A549 (cell line): ENCODE measurements at regions of chr6 and their contacts with region 1.

Region 1: DNA sequence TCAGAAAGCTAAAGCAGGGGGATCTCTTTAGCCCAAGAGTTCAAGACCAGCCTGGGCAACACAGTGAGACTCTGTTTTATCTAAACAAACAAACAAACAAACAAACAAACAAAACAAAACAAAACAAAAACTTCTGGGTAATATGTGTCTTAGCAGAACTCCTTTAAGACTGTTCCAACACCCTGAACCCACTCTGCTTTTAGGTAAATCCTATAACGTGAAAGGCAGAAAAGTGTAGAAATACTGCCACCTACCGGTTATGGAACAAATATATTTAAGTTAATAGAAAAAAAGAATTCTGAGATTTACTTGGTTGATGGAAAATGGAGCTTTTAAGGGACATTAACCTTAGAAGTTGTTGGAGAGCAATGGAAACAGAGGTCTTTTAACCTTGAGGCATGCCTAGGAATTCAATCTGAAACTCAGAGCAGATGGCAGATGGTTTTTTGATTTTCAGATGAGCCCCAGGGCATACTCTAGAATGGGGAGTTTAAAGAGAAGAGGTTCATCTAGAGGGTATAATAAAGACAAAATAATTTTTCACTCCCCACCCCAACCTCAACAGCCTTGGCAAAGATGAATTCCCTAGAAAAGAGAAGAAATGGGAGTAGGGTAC is 38.5 kb downstream of the SOD2 start:
- DNase-seq: peak; percentile 11 to 49
- ATAC-seq: peak in 1 of 2 experiments; percentile 62; a peak in 3 of 6 replicates
- H3K4me3 ChIP-seq: no peak overlapping the region
- H3K27ac ChIP-seq: no peak overlapping the region
- H3K4me1 ChIP-seq: no peaks in the 10 kb centered on the region
- CTCF ChIP-seq: peak; percentile 65; the same call in 2 of the 3 replicates
- EP300 ChIP-seq: no peak
- POLR2A ChIP-seq: no peak
- RAD21 ChIP-seq: peak; percentile 71 to 78

Region 2: GRCh38 chr6:159174263-159174969 is 480.2 kb before region 1 on chr6:
- CTCF ChIA-PET with region 1: interaction called, 25 read pairs
- POLR2A ChIA-PET with region 1: no interaction called
- DNase-seq: peak; percentile 46 to 53
- ATAC-seq: peak; percentile 76 to 94; a peak in 5 of 6 replicates
- H3K4me3 ChIP-seq: no peak overlapping the region
- H3K27ac ChIP-seq: no peak overlapping the region
- H3K4me1 ChIP-seq: peaks cover 6% of the 10 kb centered on the region; the same call in 2 of the 3 replicates
- CTCF ChIP-seq: peak; percentile 69
- EP300 ChIP-seq: no peak
- POLR2A ChIP-seq: no peak
- RAD21 ChIP-seq: peak; percentile 75 to 78

Region 3: DNA sequence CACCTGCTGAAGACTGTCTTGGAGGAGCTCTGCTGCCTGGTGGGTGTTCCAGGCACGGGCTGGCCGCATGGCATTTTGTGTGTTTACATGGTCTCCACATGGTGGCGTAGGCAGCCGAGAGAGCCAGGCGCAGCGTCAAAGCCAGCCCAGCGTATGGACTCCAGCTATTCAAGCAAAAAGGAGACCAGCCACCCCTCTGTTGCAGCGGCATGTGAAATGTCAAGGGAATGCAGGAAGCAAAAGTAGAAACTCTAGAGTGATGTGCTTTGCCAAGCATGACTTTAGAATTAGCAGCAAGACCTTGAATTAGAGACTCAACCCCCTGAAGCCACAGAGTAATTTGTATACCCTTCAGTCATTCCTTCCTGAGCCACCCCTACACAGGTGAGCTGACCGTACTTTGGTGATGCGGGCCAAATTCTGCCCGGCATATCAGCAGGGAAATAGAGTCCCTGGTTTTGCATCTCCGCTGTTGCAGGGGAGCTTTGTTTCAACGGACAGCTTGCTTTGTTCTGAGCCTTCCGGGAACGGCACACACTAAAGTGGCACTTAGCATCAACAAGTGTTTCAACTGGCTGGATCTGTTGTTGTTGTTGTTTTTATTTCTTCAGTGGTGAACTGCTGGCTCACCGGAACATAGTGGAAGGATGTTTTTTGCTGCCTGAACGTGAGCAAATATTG is 436.9 kb before region 1 on chr6:
- CTCF ChIA-PET with region 1: interaction called, 31 read pairs
- POLR2A ChIA-PET with region 1: no interaction called
- DNase-seq: peak; percentile 45 to 62
- ATAC-seq: peak; percentile 91 to 97
- H3K4me3 ChIP-seq: no peak overlapping the region
- H3K27ac ChIP-seq: no peak overlapping the region
- H3K4me1 ChIP-seq: no peaks in the 10 kb centered on the region
- CTCF ChIP-seq: peak; percentile 36; the same call in 2 of the 3 replicates
- EP300 ChIP-seq: no peak
- POLR2A ChIP-seq: no peak
- RAD21 ChIP-seq: peak; percentile 45 to 53; a peak in 3 of 5 replicates

Region 4: GRCh38 chr6:159252955-159253508 is 401.6 kb before region 1 on chr6:
- CTCF ChIA-PET with region 1: interaction called, 13 read pairs
- POLR2A ChIA-PET with region 1: no interaction called
- DNase-seq: peak; percentile 23 to 32
- ATAC-seq: peak; percentile 66 to 79; a peak in 5 of 6 replicates
- H3K4me3 ChIP-seq: no peak overlapping the region
- H3K27ac ChIP-seq: no peak overlapping the region
- H3K4me1 ChIP-seq: no peaks in the 10 kb centered on the region
- CTCF ChIP-seq: peak; percentile 40
- EP300 ChIP-seq: no peak
- POLR2A ChIP-seq: no peak
- RAD21 ChIP-seq: peak in 1 of 2 experiments; percentile 10; a peak in 2 of 5 replicates

Region 5: DNA sequence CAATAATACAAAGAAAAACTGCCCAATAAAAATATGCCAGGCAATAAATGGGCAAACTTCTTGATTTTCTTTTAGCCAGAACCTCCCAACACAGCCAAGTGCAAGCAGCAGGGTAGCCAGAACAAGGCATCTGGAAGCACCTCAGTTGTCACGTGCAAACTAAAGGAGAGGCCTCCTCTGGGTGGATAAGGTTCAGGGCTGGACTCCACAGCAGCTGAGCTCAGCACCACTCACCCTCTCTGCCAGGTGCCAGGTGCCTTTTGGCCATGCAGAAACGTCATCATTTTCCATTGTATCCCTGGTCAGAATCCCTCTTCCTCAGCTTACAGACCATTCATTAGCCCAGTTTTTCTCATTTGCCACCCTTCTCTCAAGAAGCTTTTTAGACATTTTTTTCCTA is 14.3 kb before region 1 on chr6:
- CTCF ChIA-PET with region 1: interaction called, 10 read pairs
- POLR2A ChIA-PET with region 1: no interaction called
- DNase-seq: no peak
- ATAC-seq: no peak
- H3K4me3 ChIP-seq: no peak overlapping the region
- H3K27ac ChIP-seq: no peak overlapping the region
- H3K4me1 ChIP-seq: no peaks in the 10 kb centered on the region; the same call in 2 of the 3 replicates
- CTCF ChIP-seq: no peak
- EP300 ChIP-seq: no peak
- POLR2A ChIP-seq: no peak
- RAD21 ChIP-seq: no peak

Region 6: GRCh38 chr6:159665868-159666635 is 11.5 kb after region 1 on chr6:
- CTCF ChIA-PET with region 1: interaction called, 13 read pairs
- POLR2A ChIA-PET with region 1: no interaction called
- DNase-seq: no peak
- ATAC-seq: no peak
- H3K4me3 ChIP-seq: no peak overlapping the region
- H3K27ac ChIP-seq: no peak overlapping the region
- H3K4me1 ChIP-seq: no peaks in the 10 kb centered on the region
- CTCF ChIP-seq: no peak
- EP300 ChIP-seq: no peak
- POLR2A ChIP-seq: no peak
- RAD21 ChIP-seq: no peak